ENCODE measurements at regions of chr20 and their contacts with region 1.

Region 1: GRCh38 chr20:51966291-51966971 is 164.1 kb upstream of the SALL4 start:
- DNase-seq: peak; percentile 41
- H3K4me3 ChIP-seq: no peak overlapping the region
- H3K27ac ChIP-seq: no peak overlapping the region
- H3K4me1 ChIP-seq: no peaks in the 10 kb centered on the region
- H3K27me3 ChIP-seq: no peaks in the 10 kb centered on the region
- CTCF ChIP-seq: peak; percentile 42 to 55 (median 48)
- EP300 ChIP-seq: no peak
- POLR2A ChIP-seq: no peak

Region 2: DNA sequence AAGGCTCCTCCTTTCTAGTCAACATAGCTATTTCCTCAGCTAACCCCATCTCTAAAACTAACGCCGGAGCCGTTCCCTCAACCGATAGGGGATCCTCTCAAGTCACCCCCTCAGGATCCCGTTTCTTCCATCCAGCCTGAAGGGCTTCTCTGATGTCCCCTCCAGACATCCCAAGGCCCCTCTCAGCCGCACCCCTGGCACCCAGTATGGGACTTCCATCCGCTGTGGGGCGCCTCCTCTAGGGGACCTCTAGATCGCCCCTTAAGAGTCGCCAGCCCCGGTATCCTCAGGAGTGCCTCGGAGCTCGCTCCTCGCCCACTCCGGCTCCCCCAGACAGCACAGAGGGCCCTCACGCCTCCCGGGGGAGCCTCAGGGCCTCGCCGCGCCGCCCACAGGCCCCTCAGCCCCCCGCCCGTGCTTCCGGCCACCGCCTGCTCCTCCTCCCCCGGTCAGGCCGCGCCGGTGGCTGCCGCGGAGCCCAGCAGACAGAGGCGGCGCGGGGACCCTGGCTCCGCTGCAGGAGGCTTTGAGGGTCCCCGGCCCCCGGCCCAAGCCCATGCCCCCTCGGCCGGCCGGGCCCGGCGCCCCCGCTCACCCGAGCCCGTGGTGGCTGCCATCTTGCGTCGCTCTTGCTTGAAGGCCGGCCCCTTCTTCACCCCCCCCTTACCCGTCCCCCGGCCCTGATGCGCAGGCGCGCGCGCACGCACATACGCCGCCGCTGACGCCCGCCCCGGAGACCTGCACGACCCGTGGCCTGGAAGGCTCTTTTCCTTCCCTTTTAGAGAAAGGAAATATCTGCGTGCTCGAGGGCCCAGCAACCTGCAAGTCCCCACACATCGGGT is 1853.7 kb before region 1 on chr20 and contains the start of gene UBE2V1:
- in situ Hi-C with region 1: no loop called
- intact Hi-C with region 1: no loop called
- DNase-seq: peak; percentile 92
- H3K4me3 ChIP-seq: peak within 1 kb of the TSS; percentile 85 to 100 (median 98)
- H3K27ac ChIP-seq: peak within 1 kb of the TSS; percentile 91 to 99 (median 98)
- H3K4me1 ChIP-seq: peaks cover 52 to 71% (median 65%) of the 10 kb centered on the region in 4 donors
- H3K27me3 ChIP-seq: no peaks in the 10 kb centered on the region
- CTCF ChIP-seq: peak; percentile 22 to 42 (median 25)
- EP300 ChIP-seq: no peak
- POLR2A ChIP-seq: peak; percentile 76
- total RNA-seq, gene UBE2V1: 23.7 to 104 (median 62.8) TPM

Region 3: GRCh38 chr20:51695574-51696303 is 270.7 kb before region 1 on chr20:
- in situ Hi-C with region 1: loop called in 2 of 4 experiments (anchors 25 kb)
- intact Hi-C with region 1: no loop called
- DNase-seq: no peak
- H3K4me3 ChIP-seq: no peak overlapping the region
- H3K27ac ChIP-seq: peak overlapping the region in 2 of 4 donors; percentile 11 to 34
- H3K4me1 ChIP-seq: peaks cover 0 to 11% (median 0%) of the 10 kb centered on the region in 4 donors
- H3K27me3 ChIP-seq: no peaks in the 10 kb centered on the region
- CTCF ChIP-seq: no peak
- EP300 ChIP-seq: no peak
- POLR2A ChIP-seq: no peak

Region 4: DNA sequence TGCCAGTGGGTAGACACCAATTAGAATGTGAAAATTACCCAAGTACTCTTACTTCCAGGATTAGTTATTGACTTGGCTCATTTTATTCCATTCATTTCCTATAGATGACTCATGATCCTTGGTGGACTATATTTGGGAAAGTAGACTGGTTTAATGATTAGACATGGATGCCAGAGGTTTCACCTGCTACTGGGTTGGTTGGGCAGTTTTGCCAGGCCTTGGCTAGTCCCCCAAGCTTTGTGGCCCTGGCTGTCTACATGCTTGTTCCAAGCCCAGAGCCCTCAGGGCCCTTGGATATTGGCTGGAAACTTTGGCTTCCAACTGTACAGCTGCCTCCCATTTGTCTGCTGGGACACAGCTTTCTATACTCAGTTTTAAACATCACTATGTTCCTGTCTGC is 121.0 kb after region 1 on chr20:
- in situ Hi-C with region 1: no loop called
- intact Hi-C with region 1: no loop called
- DNase-seq: no peak
- H3K4me3 ChIP-seq: no peak overlapping the region
- H3K27ac ChIP-seq: no peak overlapping the region
- H3K4me1 ChIP-seq: no peaks in the 10 kb centered on the region
- H3K27me3 ChIP-seq: no peaks in the 10 kb centered on the region
- CTCF ChIP-seq: no peak
- EP300 ChIP-seq: no peak
- POLR2A ChIP-seq: no peak

Region 5: DNA sequence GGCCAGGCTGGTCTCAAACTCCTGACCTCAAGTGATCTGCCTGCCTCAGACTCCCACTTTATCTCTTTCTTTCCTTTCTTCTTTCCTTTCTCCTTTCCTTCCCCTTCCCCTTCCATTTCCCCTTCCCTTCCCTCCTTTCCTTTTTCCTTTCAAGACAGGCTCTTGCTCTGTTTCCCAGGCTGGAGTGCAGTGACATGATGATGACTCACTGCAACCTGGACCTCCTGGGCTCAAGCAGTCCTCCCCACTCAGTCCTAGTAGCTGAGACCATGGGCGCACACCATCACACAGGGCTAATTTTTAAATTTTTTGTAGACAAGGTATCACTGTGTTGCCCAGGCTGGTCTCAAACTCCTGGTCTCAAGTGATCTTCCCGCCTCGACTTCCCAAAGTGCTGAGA is 602.8 kb after region 1 on chr20:
- in situ Hi-C with region 1: no loop called
- intact Hi-C with region 1: no loop called
- DNase-seq: no peak
- H3K4me3 ChIP-seq: no peak overlapping the region
- H3K27ac ChIP-seq: no peak overlapping the region
- H3K4me1 ChIP-seq: no peaks in the 10 kb centered on the region
- H3K27me3 ChIP-seq: no peaks in the 10 kb centered on the region
- CTCF ChIP-seq: no peak
- EP300 ChIP-seq: no peak
- POLR2A ChIP-seq: no peak

Measured in transverse colon (tissue), 4 donors.